Heart left ventricle (tissue), 16 donors: ENCODE measurements at regions of chr1 and their contacts with region 1.

Region 1: GRCh38 chr1:161367684-161368400 is at the start of gene CFAP126:
- DNase-seq: peak in 4 of 5 donors; percentile 41 to 74 (median 67)
- ATAC-seq: peak; percentile 72 to 94 (median 94)
- H3K4me3 ChIP-seq: no peak within 1 kb of the TSS
- H3K27ac ChIP-seq: peak within 1 kb of the TSS in 6 of 12 donors; percentile 24 to 71 (median 42)
- H3K4me1 ChIP-seq: peaks cover 0 to 15% (median 5%) of the 10 kb centered on the region in 12 donors
- H3K27me3 ChIP-seq: no peaks in the 10 kb centered on the region
- CTCF ChIP-seq: peak in 7 of 12 donors; percentile 15 to 42 (median 26)
- POLR2A ChIP-seq: no peak
- total RNA-seq, gene CFAP126: not detected

Region 2: GRCh38 chr1:161314201-161314981 is 53.5 kb before region 1 on chr1 and contains the start of gene SDHC:
- intact Hi-C with region 1: loop called in 1 of 10 experiments (anchors 10 kb)
- DNase-seq: peak; percentile 90 to 95 (median 91)
- ATAC-seq: peak; percentile 98 to 100 (median 99)
- H3K4me3 ChIP-seq: peak within 1 kb of the TSS; percentile 70 to 96 (median 87)
- H3K27ac ChIP-seq: peak within 1 kb of the TSS; percentile 91 to 98 (median 94)
- H3K4me1 ChIP-seq: peaks cover 0 to 25% (median 15%) of the 10 kb centered on the region in 12 donors
- H3K27me3 ChIP-seq: no peaks in the 10 kb centered on the region
- CTCF ChIP-seq: peak in 6 of 12 donors; percentile 11 to 29 (median 22)
- POLR2A ChIP-seq: peak in 1 of 2 donors; percentile 72
- total RNA-seq, gene SDHC: 113 to 408 (median 314) TPM